Cardiac septum (tissue), 1 donor: ENCODE measurements at regions of chr13 and their contacts with region 1.

Region 1: GRCh38 chr13:23701636-23702035 is 131.4 kb downstream of the TNFRSF19 start:
- DNase-seq: peak; percentile 85

Region 2: GRCh38 chr13:23656637-23657371 is 44.8 kb before region 1 on chr13:
- intact Hi-C with region 1: loop called (anchors 5 kb)
- DNase-seq: no peak